Activated T-helper 1 cell treated with anti-CD3 and anti-CD28 coated beads, Interleukin-12 subunit alpha, Interleukin-12 subunit beta, Interleukin-2, Interleukin-4 antibody, amounts not matched to agents 30 ng/mL and 10 ng/mL and 1 ng/mL, durations not matched to agents 14 hours and 24 hours and 36 hours (primary cell): ENCODE measurements at regions of chr22 and their contacts with region 1.

Region 1: GRCh38 chr22:26398741-26399153 is 30.3 kb upstream of the ASPHD2 start:
- DNase-seq: peak; percentile 29
- H3K4me3 Mint-ChIP-seq: no peak overlapping the region
- H3K27ac Mint-ChIP-seq: no peak overlapping the region
- H3K4me1 Mint-ChIP-seq: peaks cover 10% of the 10 kb centered on the region
- H3K27me3 Mint-ChIP-seq: peaks cover 4% of the 10 kb centered on the region

Region 2: DNA sequence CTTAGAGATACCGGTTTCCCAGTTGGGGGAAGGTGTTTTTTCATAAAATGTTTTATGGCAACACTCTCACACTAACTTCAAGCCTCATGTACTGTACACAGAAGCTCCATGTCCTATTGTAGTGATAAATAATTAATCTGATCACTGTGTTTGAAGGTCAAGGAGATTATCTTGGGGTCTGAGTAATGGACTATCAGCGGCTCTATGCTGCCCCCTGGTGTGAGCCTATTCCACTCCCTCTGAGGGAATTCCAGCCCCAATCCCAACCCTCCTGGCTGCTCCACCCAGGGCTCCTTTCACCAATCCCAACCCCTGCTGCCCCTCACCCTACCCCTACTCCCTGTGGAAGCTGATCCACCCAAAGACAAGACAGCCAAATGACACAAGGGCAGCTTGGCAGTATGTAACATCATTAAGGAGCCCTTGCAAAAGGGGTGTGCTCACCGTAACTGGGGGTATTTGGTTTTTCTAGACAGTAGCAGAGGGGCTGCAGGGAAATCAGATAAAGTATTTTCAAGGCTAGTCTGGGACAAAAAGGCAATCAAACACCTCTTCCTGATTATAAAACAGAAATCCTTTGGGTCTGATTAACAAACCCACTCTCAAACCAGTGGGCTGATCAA is 62.6 kb after region 1 on chr22:
- intact Hi-C with region 1: loop called (anchors 1 kb)
- DNase-seq: peak; percentile 16
- H3K4me3 Mint-ChIP-seq: no peak overlapping the region
- H3K27ac Mint-ChIP-seq: no peak overlapping the region
- H3K4me1 Mint-ChIP-seq: no peaks in the 10 kb centered on the region
- H3K27me3 Mint-ChIP-seq: no peaks in the 10 kb centered on the region

Region 3: DNA sequence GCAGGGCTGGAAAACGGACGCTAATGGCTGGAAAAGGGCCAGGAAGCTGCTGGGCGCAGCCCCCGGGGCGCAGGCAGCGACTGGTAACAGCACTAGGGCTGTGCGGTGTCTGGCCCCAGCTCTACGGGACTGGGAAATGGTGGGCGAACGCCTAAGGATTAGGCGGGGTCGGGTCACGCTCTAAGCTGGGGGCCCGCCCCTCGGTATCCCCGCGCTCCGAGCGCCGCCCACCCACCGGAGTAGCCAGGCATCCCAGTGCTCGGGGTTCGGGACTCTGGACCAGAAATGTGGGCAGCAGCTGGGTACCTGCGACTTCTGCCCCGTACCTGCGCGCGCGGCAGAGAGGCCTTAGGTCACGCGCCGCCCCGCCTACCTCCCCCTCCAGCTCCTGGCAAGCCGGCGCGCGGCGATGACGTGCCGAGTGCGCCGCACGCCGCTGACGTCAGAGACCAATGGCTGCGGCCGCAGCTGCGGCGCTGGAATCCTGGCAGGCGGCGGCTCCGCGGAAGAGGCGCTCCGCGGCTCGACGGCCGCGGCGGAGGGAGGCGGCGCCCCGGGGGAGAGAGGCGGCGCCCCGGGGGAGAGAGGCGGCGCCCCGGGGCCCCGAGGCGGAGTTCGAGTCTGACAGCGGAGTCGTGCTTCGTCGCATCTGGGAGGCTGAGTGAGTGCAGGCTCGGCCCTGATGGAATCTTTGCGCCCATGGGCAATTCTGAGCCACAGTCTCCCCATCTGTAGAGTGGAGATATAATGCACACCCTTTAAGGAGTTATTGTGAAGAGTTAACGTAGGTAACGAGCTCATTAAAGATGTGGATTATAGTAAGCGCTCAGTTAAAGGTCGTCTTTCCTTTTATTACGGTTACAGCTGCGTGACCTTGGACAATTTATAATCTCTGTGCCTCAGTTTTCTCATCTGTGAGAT is 85.0 kb after region 1 on chr22 and contains the starts of genes HPS4 and SRRD:
- intact Hi-C with region 1: loop called (anchors 1 kb)
- DNase-seq: peak; percentile 93
- H3K4me3 Mint-ChIP-seq: peak within 1 kb of the TSS; percentile 95
- H3K27ac Mint-ChIP-seq: peak within 1 kb of the TSS; percentile 94
- H3K4me1 Mint-ChIP-seq: peaks cover 70% of the 10 kb centered on the region
- H3K27me3 Mint-ChIP-seq: no peaks in the 10 kb centered on the region
- total RNA-seq, gene HPS4: 43.8 and 44.5 TPM in 2 replicates
- total RNA-seq, gene SRRD: 29.2 and 34.8 TPM in 2 replicates

Region 4: DNA sequence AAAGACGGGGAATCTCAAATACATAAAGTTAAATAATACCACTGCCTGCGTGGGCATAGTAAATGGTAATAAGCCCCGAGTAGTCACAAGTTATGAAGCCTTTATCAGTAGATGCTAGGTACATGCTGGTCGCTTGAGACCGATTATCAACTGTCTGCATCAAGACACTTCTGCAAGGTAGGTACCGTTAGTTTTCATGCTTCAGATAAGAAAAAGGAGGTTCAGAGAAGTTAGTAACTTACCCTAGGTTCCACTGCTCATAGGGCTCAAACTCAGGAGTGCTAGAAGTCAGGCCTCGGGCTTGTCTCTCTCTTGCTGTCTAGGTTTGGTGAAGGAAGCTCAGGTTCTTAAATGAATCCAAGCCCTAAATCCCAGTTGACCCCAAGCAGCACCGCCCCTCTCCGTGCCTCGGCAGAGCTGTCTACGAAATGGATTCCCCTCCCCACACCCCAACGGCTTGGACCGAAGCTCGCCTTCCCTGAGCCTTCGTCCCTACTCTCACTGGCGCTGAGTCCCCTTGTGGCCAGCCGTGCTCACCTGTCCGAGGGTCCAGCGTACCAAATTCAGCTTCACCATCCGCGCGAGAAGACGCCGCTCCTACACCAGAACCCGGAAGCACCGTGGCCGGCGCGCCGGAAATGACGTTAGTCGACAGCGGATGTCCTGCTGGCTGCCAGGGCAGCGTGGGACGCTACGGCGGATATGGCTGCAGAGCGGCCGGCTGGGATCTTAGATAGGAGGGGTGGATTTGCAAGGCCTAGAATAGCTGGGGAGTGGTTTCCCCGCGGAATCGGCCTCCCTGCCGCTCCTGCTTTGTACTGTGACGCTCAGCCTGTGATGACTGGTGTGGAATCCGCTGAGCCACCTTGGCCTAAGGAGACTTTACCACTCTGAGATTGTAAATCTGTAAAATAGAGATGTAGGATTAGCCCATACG is 113.4 kb after region 1 on chr22 and contains the start of gene TFIP11:
- intact Hi-C with region 1: loop called (anchors 1 kb)
- DNase-seq: peak; percentile 91
- H3K4me3 Mint-ChIP-seq: peak within 1 kb of the TSS; percentile 100
- H3K27ac Mint-ChIP-seq: peak within 1 kb of the TSS; percentile 96
- H3K4me1 Mint-ChIP-seq: peaks cover 50% of the 10 kb centered on the region
- H3K27me3 Mint-ChIP-seq: no peaks in the 10 kb centered on the region
- total RNA-seq, gene TFIP11: 57.2 and 58.1 TPM in 2 replicates

Region 5: GRCh38 chr22:26665813-26666231 is 267.1 kb after region 1 on chr22:
- intact Hi-C with region 1: loop called (anchors 1 kb)
- DNase-seq: no peak
- H3K4me3 Mint-ChIP-seq: peak overlapping the region; percentile 75
- H3K27ac Mint-ChIP-seq: peak overlapping the region; percentile 96
- H3K4me1 Mint-ChIP-seq: peaks cover 76% of the 10 kb centered on the region
- H3K27me3 Mint-ChIP-seq: no peaks in the 10 kb centered on the region